PC-3 (cell line): ENCODE measurements at regions of chr12 and their contacts with region 1.

Region 1: GRCh38 chr12:109963743-109964429 is 32.3 kb downstream of the GIT2 start:
- DNase-seq: no peak
- ATAC-seq: peak; percentile 58
- H3K4me3 ChIP-seq: no peak overlapping the region
- H3K27ac ChIP-seq: no peak overlapping the region
- H3K4me1 ChIP-seq: peaks cover 12% of the 10 kb centered on the region
- H3K27me3 ChIP-seq: no peaks in the 10 kb centered on the region
- CTCF ChIP-seq: no peak

Region 2: GRCh38 chr12:109222062-109222461 is 741.8 kb before region 1 on chr12:
- CTCF ChIA-PET with region 1: no interaction called
- POLR2A ChIA-PET with region 1: no interaction called
- intact Hi-C with region 1: no loop called
- DNase-seq: no peak
- ATAC-seq: no peak
- H3K4me3 ChIP-seq: no peak overlapping the region
- H3K27ac ChIP-seq: no peak overlapping the region
- H3K4me1 ChIP-seq: no peaks in the 10 kb centered on the region
- H3K27me3 ChIP-seq: no peaks in the 10 kb centered on the region
- CTCF ChIP-seq: no peak

Region 3: DNA sequence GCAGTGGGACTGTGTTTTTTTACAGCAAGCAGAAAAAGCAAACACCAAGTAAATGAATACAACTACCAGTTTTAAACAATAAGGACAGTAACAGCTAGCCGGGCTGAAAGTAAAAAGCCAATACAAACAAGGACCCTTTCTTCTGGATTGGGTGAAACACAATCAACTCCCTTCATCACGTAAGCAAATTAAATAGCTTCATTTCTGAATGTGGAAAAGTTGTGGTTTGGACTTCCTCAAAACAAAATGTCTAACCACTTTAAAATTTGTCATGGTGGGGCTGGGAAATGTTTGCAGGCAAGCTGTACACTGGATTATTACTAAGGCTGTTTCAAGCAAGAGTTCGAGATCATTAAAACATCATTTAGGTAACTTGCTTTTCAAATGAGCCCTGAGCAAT is 16.4 kb before region 1 on chr12:
- CTCF ChIA-PET with region 1: no interaction called
- POLR2A ChIA-PET with region 1: interaction called, 11 read pairs
- intact Hi-C with region 1: no loop called
- DNase-seq: no peak
- ATAC-seq: no peak
- H3K4me3 ChIP-seq: no peak overlapping the region
- H3K27ac ChIP-seq: no peak overlapping the region
- H3K4me1 ChIP-seq: peaks cover 22% of the 10 kb centered on the region
- H3K27me3 ChIP-seq: no peaks in the 10 kb centered on the region
- CTCF ChIP-seq: no peak